Sigmoid colon (tissue), 7 donors: ENCODE measurements at regions of chr12 and their contacts with region 1.

Region 1: GRCh38 chr12:57462251-57462911 is 2.8 kb downstream of the GLI1 start:
- DNase-seq: peak; percentile 95
- H3K4me3 ChIP-seq: peak overlapping the region; percentile 56 to 71 (median 63)
- H3K27ac ChIP-seq: peak overlapping the region; percentile 84 to 91 (median 84)
- H3K4me1 ChIP-seq: peaks cover 8 to 38% (median 27%) of the 10 kb centered on the region in 4 donors
- H3K27me3 ChIP-seq: peaks cover 0 to 13% (median 0%) of the 10 kb centered on the region in 3 donors
- CTCF ChIP-seq: peak; percentile 91 to 98 (median 95)
- EP300 ChIP-seq: no peak
- POLR2A ChIP-seq: no peak

Region 2: GRCh38 chr12:57430931-57431720 is 31.3 kb before region 1 on chr12 and contains the start of gene R3HDM2:
- intact Hi-C with region 1: loop called (anchors 2 kb)
- DNase-seq: peak; percentile 98
- H3K4me3 ChIP-seq: peak within 1 kb of the TSS; percentile 65 to 85 (median 84)
- H3K27ac ChIP-seq: peak within 1 kb of the TSS; percentile 94 to 99 (median 97)
- H3K4me1 ChIP-seq: peaks cover 0 to 18% (median 14%) of the 10 kb centered on the region in 4 donors
- H3K27me3 ChIP-seq: no peaks in the 10 kb centered on the region
- CTCF ChIP-seq: no peak
- EP300 ChIP-seq: peak in 2 of 4 donors; percentile 9 to 53
- POLR2A ChIP-seq: peak; percentile 89 to 94
- total RNA-seq, gene R3HDM2: 28.3 to 37.7 (median 28.5) TPM

Region 3: DNA sequence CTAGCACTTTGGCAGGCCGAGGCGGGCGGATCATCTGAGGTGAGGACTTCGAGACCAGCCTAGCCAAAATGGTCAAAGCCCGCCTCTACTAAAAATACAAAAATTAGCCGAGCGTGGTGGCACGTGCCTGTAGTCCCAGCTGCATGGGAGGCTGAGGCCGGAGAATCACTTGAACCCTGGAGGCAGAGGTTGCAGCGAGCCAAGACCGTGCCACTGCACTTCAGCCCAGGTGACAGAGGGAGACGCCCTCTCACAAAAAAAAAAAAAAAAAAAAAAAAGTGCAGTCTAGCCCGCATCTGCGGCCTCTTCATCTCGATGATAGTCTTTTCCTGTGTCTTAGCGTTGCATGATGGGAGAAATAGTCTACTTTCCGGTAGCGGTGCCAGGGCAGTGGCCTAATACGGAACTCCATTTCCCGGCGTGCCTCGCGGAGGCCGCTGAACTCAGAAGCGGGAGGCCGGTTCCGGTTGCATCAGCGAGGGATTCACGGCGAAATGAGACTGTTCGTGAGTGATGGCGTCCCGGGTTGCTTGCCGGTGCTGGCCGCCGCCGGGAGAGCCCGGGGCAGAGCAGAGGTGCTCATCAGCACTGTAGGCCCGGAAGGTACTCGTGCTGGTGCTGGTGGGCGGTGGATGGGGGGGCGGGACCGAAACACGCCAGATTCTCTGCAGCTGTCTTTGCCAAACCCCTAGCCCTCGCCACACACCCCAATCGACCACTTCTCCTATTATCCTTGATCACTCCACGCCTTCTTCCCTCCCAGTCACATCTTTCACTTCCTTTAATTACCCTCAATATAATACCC is 25.4 kb after region 1 on chr12 and contains the start of gene MARS1:
- intact Hi-C with region 1: loop called (anchors 2 kb)
- DNase-seq: peak; percentile 98
- H3K4me3 ChIP-seq: peak within 1 kb of the TSS; percentile 80 to 97 (median 92)
- H3K27ac ChIP-seq: peak within 1 kb of the TSS; percentile 81 to 87 (median 86)
- H3K4me1 ChIP-seq: peaks cover 0 to 22% (median 13%) of the 10 kb centered on the region in 4 donors
- H3K27me3 ChIP-seq: no peaks in the 10 kb centered on the region
- CTCF ChIP-seq: no peak
- EP300 ChIP-seq: peak in 1 of 4 donors; percentile 83
- POLR2A ChIP-seq: peak; percentile 47 to 65
- total RNA-seq, gene MARS1: 46.6 to 56.3 (median 53.2) TPM